ENCODE measurements at regions of chr21 and their contacts with region 1.

Region 1: DNA sequence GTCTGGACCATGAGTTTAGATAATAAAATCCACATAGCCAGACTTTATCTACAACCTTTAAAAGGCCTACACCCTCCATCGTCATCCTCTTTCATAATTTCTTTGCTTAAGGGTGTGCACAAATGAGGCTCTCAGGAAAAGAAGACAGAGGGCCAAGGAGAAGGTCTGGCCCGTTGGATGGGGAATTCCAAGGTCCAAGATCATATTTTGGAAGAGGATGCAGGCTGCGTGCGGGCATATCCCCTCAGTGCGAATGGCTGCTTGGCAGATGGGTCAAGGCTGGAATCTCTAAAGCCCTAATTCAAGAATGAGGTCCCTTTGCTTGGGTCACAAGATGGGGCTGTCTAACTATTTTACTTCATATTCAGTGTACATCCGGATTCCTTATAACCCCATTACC is 782.2 kb upstream of the NCAM2 start:
- DNase-seq: peak; percentile 43

Region 2: DNA sequence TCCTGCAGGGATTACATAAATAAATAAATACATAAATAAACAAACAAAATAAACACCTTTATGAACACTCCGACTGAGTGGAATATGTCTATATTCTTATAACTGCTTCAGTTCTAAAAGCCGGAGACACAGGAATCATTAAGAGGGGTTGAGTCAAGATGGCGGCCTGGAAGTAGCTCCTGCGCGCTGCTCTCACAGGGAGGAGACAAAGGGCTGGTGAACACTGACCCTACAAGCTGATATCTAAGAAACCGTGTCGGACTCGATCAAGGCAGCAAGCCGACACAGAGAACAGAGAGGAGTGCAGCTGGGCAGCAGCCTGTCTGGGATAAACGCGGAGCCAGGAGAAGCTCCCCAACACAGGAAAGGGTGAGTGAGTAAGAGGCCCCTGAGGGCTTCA is 316.3 kb before region 1 on chr21:
- intact Hi-C with region 1: loop called in 1 of 2 experiments (anchors 5 kb)
- DNase-seq: no peak

Region 3: GRCh38 chr21:20311234-20311787 is 95.4 kb after region 1 on chr21:
- intact Hi-C with region 1: no loop called
- DNase-seq: no peak

Region 4: DNA sequence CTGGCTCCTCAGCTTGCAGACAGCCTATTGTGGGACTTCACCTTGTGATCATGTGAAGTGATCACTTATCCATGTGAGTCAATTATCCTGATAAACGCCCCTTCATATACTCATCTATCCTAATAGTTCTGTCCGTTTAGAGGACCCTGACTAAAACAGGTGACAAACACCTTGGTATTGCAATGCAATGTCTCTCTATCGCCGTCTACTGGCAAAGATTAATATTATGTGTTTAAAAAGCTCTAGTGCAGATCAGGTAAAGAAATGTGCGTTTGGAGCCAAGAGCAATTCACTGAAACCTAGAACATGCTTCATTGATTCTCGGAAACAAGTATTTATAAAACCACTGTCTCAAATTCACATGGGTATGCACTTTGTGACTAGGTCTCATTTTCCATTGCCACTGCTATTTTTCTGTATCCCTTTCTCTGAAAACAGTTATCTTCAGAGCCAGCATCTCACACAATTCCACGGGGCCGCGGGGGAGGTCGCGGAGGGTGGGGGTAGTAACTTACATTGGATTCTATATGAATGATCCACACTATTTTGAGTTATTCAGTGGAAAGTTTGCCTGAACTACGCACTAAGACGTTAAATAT is 227.7 kb after region 1 on chr21:
- intact Hi-C with region 1: no loop called
- DNase-seq: no peak